H1 (cell line): ENCODE measurements at regions of chr4 and their contacts with region 1.

Region 1: GRCh38 chr4:151276787-151277562 is at the start of gene PRSS48:
- DNase-seq: peak; percentile 79 to 94
- H3K4me3 ChIP-seq: no peak within 1 kb of the TSS
- H3K27ac ChIP-seq: no peak within 1 kb of the TSS
- H3K4me1 ChIP-seq: peaks cover 0 to 6% (median 2%) of the 10 kb centered on the region in 4 experiments; a peak in 3 of 7 replicates
- H3K27me3 ChIP-seq: no peaks in the 10 kb centered on the region
- CTCF ChIP-seq: peak; percentile 91 to 94 (median 92)
- EP300 ChIP-seq: 0 out of 3 replicates have a peak, but pooled peaks of 1 of the 2 experiments have one; percentile 31
- POLR2A ChIP-seq: no peak
- RAD21 ChIP-seq: peak; percentile 94 to 98
- total RNA-seq, gene PRSS48: not detected in 2 replicates

Region 2: GRCh38 chr4:151266497-151266896 is 10.5 kb before region 1 on chr4:
- CTCF ChIA-PET with region 1: interaction called, 52 read pairs
- POLR2A ChIA-PET with region 1: interaction called, 4 read pairs
- DNase-seq: no peak
- H3K4me3 ChIP-seq: no peak overlapping the region
- H3K27ac ChIP-seq: no peak overlapping the region
- H3K4me1 ChIP-seq: no peaks in the 10 kb centered on the region
- H3K27me3 ChIP-seq: no peaks in the 10 kb centered on the region
- CTCF ChIP-seq: no peak
- EP300 ChIP-seq: no peak
- POLR2A ChIP-seq: no peak
- RAD21 ChIP-seq: no peak

Region 3: DNA sequence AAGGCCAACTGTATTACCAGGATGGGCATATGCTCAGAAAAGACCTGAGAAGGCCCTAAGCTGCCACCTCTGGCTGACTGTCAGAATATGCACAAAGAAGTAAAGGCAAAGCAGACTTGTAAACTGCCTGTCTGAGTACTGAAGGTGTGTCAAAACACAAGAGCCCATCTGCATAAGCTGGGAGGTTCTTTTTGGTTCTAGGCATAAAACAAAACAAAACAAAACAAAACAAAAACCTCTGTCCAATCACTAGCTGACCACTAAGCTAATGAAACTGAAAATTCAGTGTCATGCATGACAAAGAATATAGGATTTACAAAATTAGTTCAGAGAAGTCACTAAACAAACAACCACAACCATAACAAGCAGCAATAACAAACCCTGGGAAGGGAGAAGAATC is 27.8 kb after region 1 on chr4:
- CTCF ChIA-PET with region 1: interaction called, 59 read pairs
- POLR2A ChIA-PET with region 1: interaction called, 5 read pairs
- DNase-seq: no peak
- H3K4me3 ChIP-seq: no peak overlapping the region
- H3K27ac ChIP-seq: no peak overlapping the region
- H3K4me1 ChIP-seq: peaks cover 4 to 7% (median 4%) of the 10 kb centered on the region in 4 experiments
- H3K27me3 ChIP-seq: no peaks in the 10 kb centered on the region
- CTCF ChIP-seq: peak in 1 of 3 experiments; percentile 10; a peak in 1 of 4 replicates
- EP300 ChIP-seq: no peak
- POLR2A ChIP-seq: no peak
- RAD21 ChIP-seq: no peak; a peak in 1 of 4 replicates

Region 4: GRCh38 chr4:151325111-151325948 is 48.4 kb after region 1 on chr4 and contains the start of gene SH3D19:
- CTCF ChIA-PET with region 1: interaction called, 21 read pairs
- POLR2A ChIA-PET with region 1: interaction called, 14 read pairs
- DNase-seq: peak in 1 of 2 experiments; percentile 75
- H3K4me3 ChIP-seq: peak within 1 kb of the TSS; percentile 65 to 86 (median 82)
- H3K27ac ChIP-seq: peak within 1 kb of the TSS; percentile 85
- H3K4me1 ChIP-seq: peaks cover 2 to 8% (median 6%) of the 10 kb centered on the region in 4 experiments; a peak in 4 of 7 replicates
- H3K27me3 ChIP-seq: no peaks in the 10 kb centered on the region
- CTCF ChIP-seq: no peak
- EP300 ChIP-seq: no peak
- POLR2A ChIP-seq: peak in 1 of 2 experiments; percentile 4; a peak in 2 of 3 replicates
- RAD21 ChIP-seq: no peak
- total RNA-seq, gene SH3D19: 51.3 and 55.8 TPM in 2 replicates

Region 5: DNA sequence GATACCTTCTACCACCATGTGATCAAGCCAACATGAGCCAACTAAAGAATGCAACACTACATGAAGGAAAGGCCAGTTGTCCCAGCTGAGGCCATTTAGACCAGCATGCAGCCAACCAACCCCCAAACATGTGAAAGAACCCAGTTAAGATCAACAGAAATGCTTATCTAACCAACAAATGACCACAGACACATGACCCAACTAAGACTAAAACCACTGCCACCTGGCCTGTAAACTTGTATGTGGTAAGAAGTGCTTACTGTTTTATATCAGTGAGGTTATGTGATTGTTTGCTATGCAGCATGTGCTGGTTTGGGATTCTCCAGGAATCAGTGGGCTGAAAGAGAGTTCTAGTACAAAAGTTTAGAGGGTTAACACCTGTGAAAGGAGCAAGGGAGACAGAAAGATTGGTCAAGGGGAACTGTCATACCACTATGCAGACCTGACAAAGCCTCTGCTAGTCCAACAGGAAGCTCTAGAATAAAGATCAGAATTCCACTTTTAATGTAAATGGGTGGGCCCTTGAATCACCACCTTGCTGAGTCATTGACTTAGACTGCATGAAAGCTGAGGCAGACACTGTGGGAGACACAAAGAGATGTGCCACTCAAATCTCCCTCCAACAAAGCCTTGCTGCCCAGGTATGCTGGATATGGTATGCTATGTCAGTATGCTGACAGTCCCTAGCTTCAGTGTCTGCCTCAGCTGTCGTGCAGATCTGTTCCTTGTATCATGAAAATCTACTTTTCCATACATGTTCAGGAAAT is 54.5 kb after region 1 on chr4:
- CTCF ChIA-PET with region 1: interaction called, 21 read pairs
- POLR2A ChIA-PET with region 1: interaction called, 14 read pairs
- DNase-seq: no peak
- H3K4me3 ChIP-seq: no peak overlapping the region
- H3K27ac ChIP-seq: no peak overlapping the region
- H3K4me1 ChIP-seq: no peaks in the 10 kb centered on the region
- H3K27me3 ChIP-seq: no peaks in the 10 kb centered on the region
- CTCF ChIP-seq: no peak
- EP300 ChIP-seq: no peak
- POLR2A ChIP-seq: no peak
- RAD21 ChIP-seq: no peak

Region 6: GRCh38 chr4:151362404-151363164 is 85.6 kb after region 1 on chr4:
- CTCF ChIA-PET with region 1: interaction called, 20 read pairs
- POLR2A ChIA-PET with region 1: no interaction called
- DNase-seq: peak; percentile 81 to 90
- H3K4me3 ChIP-seq: no peak overlapping the region
- H3K27ac ChIP-seq: no peak overlapping the region
- H3K4me1 ChIP-seq: peaks cover 0 to 2% (median 0%) of the 10 kb centered on the region in 4 experiments; a peak in 1 of 7 replicates
- H3K27me3 ChIP-seq: no peaks in the 10 kb centered on the region
- CTCF ChIP-seq: peak; percentile 91 to 99 (median 99)
- EP300 ChIP-seq: no peak
- POLR2A ChIP-seq: no peak
- RAD21 ChIP-seq: peak; percentile 98 to 99

Region 7: GRCh38 chr4:151489462-151490203 is 212.7 kb after region 1 on chr4:
- CTCF ChIA-PET with region 1: interaction called, 11 read pairs
- POLR2A ChIA-PET with region 1: no interaction called
- DNase-seq: peak; percentile 66 to 76
- H3K4me3 ChIP-seq: no peak overlapping the region
- H3K27ac ChIP-seq: no peak overlapping the region
- H3K4me1 ChIP-seq: peaks cover 2 to 13% (median 10%) of the 10 kb centered on the region in 4 experiments; a peak in 5 of 7 replicates
- H3K27me3 ChIP-seq: no peaks in the 10 kb centered on the region
- CTCF ChIP-seq: peak; percentile 78 to 91 (median 81)
- EP300 ChIP-seq: no peak
- POLR2A ChIP-seq: no peak
- RAD21 ChIP-seq: peak; percentile 85